Cardiac septum (tissue), 1 donor: ENCODE measurements at regions of chr13 and their contacts with region 1.

Region 1: GRCh38 chr13:49300739-49301589 is 53.2 kb downstream of the CDADC1 start:
- DNase-seq: no peak

Region 2: DNA sequence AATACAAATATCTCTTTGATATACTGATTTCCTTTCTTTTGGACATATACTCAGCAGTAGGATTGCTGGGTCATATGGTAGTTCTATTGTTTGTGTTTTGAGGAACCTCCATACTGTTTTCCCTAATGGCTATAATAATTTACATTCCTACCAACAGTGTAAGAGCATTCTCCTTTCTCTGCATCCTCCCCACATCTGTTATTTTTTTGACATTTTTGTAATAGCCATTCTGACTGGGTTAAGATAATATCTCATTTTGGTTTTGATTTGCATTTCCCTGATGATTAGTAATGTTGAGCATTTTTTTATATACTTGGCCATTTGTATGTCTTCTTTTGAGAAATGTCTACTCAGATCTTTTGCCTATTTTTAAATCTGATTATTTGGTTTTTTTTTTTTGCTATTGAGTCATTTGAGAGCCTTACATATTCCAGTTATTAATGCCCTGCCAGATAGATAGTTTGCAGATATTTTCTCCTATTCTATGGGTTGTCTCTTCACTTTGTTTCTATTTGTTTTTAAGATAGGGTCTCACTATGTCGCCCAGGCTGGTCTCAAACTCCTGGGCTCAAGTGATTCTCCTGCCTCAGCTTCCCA is 229.5 kb before region 1 on chr13:
- intact Hi-C with region 1: no loop called
- DNase-seq: no peak

Region 3: GRCh38 chr13:49238651-49239050 is 62.3 kb before region 1 on chr13:
- intact Hi-C with region 1: no loop called
- DNase-seq: no peak

Region 4: DNA sequence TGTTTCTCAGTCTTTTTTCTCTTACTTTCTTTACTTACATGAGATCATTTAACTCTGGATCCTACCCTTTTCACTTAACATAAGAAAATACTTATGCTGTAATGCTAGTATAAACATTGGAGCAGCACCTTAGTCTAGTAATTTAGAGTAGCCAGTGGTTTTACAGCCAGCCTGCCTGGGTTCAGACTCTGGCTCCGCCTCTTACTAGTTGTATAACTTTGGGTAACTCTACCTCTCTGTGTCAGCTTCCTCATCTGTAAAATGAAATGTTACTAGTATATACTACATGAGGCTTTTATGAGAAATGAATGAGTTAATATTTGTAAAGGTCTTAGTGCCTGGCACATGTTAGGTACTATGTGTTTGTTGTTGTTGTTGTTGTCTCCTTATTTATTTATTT is 47.7 kb before region 1 on chr13:
- intact Hi-C with region 1: no loop called
- DNase-seq: no peak

Region 5: DNA sequence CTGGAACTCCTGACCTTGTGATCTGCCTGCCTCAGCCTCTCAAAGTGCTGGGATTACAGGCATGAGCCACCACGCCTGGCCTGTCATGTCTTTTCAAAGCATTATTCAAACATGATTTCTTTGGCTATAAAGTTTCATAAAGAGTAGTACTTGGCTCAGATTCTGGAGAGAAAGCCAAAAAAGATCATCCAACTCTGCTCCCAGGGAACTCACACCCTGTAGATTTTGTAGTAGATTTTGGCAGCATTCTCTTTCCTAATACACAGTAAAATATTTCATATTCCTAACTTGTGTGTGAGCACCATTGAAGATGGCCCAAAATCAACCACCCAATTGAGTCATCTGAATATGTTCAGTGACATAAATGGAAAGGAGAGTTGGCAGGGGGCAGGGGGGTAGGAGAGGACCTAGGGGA is 94.5 kb after region 1 on chr13:
- intact Hi-C with region 1: loop called (anchors 5 kb)
- DNase-seq: no peak

Region 6: DNA sequence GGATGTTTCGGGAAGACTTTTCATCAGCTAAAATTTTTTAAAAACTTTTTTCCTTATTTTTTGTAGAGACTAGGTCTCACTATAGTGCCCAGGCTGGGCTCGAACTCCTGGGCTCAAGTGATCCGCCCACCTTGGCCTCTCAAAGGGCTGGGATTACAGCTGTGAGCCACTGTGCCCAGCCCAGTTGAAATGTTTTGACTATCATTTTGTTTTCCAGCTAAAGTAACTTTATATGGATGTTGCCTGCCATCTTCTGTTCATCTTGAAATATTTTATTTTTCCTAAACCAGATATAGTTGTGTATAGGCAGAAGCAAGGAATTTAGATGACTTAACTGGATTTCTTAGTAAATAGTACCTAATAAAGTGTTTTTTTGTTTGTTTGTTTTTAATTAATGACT is 135.9 kb after region 1 on chr13:
- intact Hi-C with region 1: loop called (anchors 2 kb)
- DNase-seq: no peak